Activated T-helper 2 cell treated with anti-CD3 and anti-CD28 coated beads, Interferon-gamma antibody, Interleukin-2, Interleukin-4, amounts not matched to agents 10 μg/mL and 5 μg/mL and 100 μg/mL, durations not matched to agents 14 hours and 24 hours and 36 hours (primary cell): ENCODE measurements at regions of chr19 and their contacts with region 1.

Region 1: DNA sequence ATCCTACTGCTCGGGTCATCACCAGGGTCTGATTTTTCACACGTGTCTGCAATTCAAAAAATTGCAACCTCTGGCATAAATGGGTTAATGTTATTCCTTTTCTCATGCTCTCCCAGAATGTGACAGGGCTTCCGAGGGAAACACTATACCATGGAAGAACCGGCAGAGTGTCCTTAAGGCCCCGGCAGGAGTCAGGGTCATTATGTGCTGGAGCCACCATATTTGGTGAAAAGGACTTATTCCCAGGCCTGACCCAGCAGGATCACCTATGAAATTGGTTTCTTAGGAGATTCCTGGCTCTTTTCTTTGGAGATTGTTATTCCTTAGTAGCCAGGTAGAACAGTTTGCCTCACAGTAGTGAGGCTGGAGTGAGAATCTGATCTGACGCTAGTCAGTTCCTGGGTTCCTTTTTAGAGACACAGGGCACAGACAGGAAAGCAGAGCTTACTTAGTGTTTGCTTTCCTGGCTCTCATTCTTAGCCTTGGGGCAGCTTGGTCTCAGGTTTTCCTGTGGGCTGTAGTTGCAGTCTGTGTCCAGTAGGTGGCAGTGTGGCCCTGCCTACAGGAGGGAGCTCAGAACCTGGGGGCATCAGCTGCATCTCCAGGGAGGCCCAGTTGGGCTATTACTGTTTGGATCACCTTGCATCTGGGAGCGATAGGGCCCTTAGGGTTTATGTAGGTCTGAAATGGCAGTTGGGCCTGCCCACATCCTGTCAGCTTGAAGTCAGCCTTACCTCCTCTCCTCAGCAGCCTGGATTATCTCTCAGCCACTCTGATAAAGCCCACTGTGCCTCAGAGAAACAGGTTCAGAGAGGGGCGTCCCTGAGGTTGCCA is 12.4 kb downstream of the SNRNP70 start:
- DNase-seq: peak; percentile 69
- H3K4me3 Mint-ChIP-seq: no peak overlapping the region
- H3K27ac Mint-ChIP-seq: no peak overlapping the region
- H3K4me1 Mint-ChIP-seq: peaks cover 1% of the 10 kb centered on the region
- H3K27me3 Mint-ChIP-seq: no peaks in the 10 kb centered on the region

Region 2: GRCh38 chr19:48720613-48721296 is 376.9 kb before region 1 on chr19:
- intact Hi-C with region 1: no loop called
- DNase-seq: peak; percentile 90
- H3K4me3 Mint-ChIP-seq: peak overlapping the region; percentile 91
- H3K27ac Mint-ChIP-seq: peak overlapping the region; percentile 98
- H3K4me1 Mint-ChIP-seq: peaks cover 14% of the 10 kb centered on the region
- H3K27me3 Mint-ChIP-seq: no peaks in the 10 kb centered on the region

Region 3: GRCh38 chr19:49196527-49197240 is 99.0 kb after region 1 on chr19:
- intact Hi-C with region 1: loop called (anchors 5 kb)
- DNase-seq: no peak
- H3K4me3 Mint-ChIP-seq: no peak overlapping the region
- H3K27ac Mint-ChIP-seq: no peak overlapping the region
- H3K4me1 Mint-ChIP-seq: peaks cover 6% of the 10 kb centered on the region
- H3K27me3 Mint-ChIP-seq: peaks cover 2% of the 10 kb centered on the region